ENCODE measurements at regions of chr7 and their contacts with region 1.

Region 1: GRCh38 chr7:36318116-36318515 is 71.5 kb upstream of the ANLN start:
- DNase-seq: no peak
- H3K4me3 ChIP-seq: no peak overlapping the region
- CTCF ChIP-seq: no peak

Region 2: GRCh38 chr7:35985126-35985754 is 332.9 kb before region 1 on chr7:
- CTCF ChIA-PET with region 1: interaction called, 151 read pairs
- POLR2A ChIA-PET with region 1: no interaction called
- DNase-seq: no peak
- H3K4me3 ChIP-seq: no peak overlapping the region
- CTCF ChIP-seq: peak; percentile 97

Region 3: DNA sequence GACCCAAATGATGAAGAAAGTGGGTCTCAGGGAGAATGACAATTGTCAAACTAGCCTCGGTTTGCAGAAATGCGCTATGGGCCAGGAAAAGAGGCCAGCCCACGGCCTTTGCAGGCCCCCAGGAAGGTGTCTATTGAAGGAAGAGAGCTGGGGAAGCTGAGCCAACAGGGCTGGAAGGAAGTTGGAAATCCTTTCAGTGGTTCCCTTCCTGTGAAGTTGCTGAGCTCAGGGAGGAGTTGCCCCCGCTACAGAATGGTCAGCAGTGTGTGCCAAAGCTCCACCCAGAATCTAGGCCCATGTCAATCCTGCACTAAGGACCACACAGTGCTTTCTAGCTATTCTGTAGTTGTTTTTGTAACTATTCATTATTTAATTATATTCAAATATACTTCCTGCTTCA is 20.0 kb before region 1 on chr7:
- CTCF ChIA-PET with region 1: interaction called, 97 read pairs
- POLR2A ChIA-PET with region 1: no interaction called
- DNase-seq: no peak
- H3K4me3 ChIP-seq: no peak overlapping the region
- CTCF ChIP-seq: no peak

Region 4: DNA sequence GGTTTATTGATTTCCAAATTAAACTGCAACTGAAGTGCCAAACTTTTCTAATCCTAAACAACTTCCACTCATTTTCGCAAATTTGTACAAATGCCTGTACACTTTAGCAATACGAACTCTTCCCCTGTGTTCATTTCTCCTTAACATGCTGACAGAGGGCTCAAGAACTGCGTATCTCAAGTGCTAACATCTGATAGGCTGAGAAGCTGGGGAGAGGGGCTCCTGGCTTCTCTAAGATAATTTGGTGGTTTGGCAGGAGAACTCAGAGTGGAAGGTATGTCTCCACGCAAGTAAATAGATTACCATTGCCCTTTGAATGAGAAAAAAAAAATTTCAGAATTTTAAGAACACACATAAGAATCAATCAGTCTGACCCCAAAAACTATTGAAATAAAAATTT is 18.3 kb after region 1 on chr7:
- CTCF ChIA-PET with region 1: interaction called, 33 read pairs
- POLR2A ChIA-PET with region 1: no interaction called
- DNase-seq: no peak
- H3K4me3 ChIP-seq: no peak overlapping the region
- CTCF ChIP-seq: no peak

Region 5: GRCh38 chr7:36366718-36367560 is 48.8 kb after region 1 on chr7:
- CTCF ChIA-PET with region 1: interaction called, 15 read pairs
- POLR2A ChIA-PET with region 1: no interaction called
- DNase-seq: no peak
- H3K4me3 ChIP-seq: peak overlapping the region; percentile 88
- CTCF ChIP-seq: peak; percentile 87

Region 6: DNA sequence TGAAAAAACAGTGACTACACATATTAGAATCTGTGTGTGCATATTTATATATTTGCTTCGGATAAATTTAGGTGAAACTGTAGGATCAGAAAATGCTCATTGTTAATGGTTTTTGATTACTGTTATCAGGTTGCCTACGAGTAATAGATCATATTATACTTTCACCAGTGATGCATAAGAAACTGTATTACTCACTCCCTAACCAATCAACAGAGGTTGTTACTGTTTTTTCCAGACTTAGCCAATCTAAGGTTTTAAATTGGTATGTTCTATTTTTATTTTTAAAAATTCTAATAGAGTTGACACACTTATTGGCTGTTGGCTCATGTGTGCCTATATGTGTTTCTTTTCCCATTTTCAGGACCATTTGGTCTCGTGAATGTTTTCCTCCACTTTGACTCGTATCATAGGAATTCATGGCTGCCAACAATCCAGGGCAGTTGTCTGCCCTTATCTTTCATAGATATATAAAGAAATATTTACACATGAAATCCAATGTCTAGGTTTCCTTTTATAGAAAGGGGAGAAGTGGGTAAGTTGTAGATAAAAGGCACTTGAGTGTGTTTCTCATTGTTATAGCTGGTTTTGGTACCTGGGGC is 130.8 kb after region 1 on chr7:
- CTCF ChIA-PET with region 1: no interaction called
- POLR2A ChIA-PET with region 1: no interaction called
- DNase-seq: no peak
- H3K4me3 ChIP-seq: no peak overlapping the region
- CTCF ChIP-seq: no peak